T-cell (primary cell): ENCODE measurements at regions of chr5 and their contacts with region 1.

Region 1: GRCh38 chr5:24161559-24161958 is 483.2 kb downstream of the CDH10 start:
- DNase-seq: no peak
- ATAC-seq: no peak
- H3K4me3 ChIP-seq: no peak overlapping the region
- H3K4me3 Mint-ChIP-seq: no peak overlapping the region
- H3K27ac ChIP-seq: no peak overlapping the region
- H3K27ac Mint-ChIP-seq: no peak overlapping the region
- H3K4me1 ChIP-seq: no peaks in the 10 kb centered on the region
- H3K4me1 Mint-ChIP-seq: no peaks in the 10 kb centered on the region
- H3K27me3 ChIP-seq: no peaks in the 10 kb centered on the region
- H3K27me3 Mint-ChIP-seq: no peaks in the 10 kb centered on the region

Region 2: GRCh38 chr5:24026288-24026687 is 135.3 kb before region 1 on chr5:
- CTCF ChIA-PET with region 1: no interaction called
- POLR2A ChIA-PET with region 1: no interaction called
- DNase-seq: no peak
- ATAC-seq: no peak
- H3K4me3 ChIP-seq: no peak overlapping the region
- H3K4me3 Mint-ChIP-seq: no peak overlapping the region
- H3K27ac ChIP-seq: no peak overlapping the region
- H3K27ac Mint-ChIP-seq: no peak overlapping the region
- H3K4me1 ChIP-seq: no peaks in the 10 kb centered on the region
- H3K4me1 Mint-ChIP-seq: no peaks in the 10 kb centered on the region
- H3K27me3 ChIP-seq: no peaks in the 10 kb centered on the region
- H3K27me3 Mint-ChIP-seq: no peaks in the 10 kb centered on the region

Region 3: DNA sequence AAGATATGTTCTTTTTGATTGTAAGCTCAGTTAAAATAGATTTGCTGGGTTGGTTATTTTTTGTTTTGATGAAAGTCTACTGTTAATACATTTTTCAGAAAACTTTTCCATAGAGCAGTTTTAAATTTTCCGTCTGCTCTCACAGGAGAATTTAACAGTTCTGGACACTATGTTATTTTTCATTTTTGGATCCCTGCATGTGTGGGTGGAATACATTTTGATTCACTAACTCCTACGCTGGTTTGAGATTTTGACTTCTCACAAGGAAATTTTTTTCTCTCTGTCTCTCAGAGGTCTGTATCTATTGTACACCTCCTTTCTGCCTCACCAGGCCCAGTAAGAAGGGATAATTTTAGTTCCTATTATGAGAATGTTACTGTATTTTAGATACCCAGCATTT is 19.2 kb before region 1 on chr5:
- CTCF ChIA-PET with region 1: no interaction called
- POLR2A ChIA-PET with region 1: interaction called in 1 of 2 experiments, 15 read pairs
- DNase-seq: no peak
- ATAC-seq: no peak
- H3K4me3 ChIP-seq: no peak overlapping the region
- H3K4me3 Mint-ChIP-seq: no peak overlapping the region
- H3K27ac ChIP-seq: no peak overlapping the region
- H3K27ac Mint-ChIP-seq: no peak overlapping the region
- H3K4me1 ChIP-seq: no peaks in the 10 kb centered on the region
- H3K4me1 Mint-ChIP-seq: no peaks in the 10 kb centered on the region
- H3K27me3 ChIP-seq: no peaks in the 10 kb centered on the region
- H3K27me3 Mint-ChIP-seq: no peaks in the 10 kb centered on the region